AG04450 (cell line): ENCODE measurements at regions of chr22 and their contacts with region 1.

Region 1: GRCh38 chr22:23849009-23850006 is 8.4 kb upstream of the SLC2A11 start:
- DNase-seq: no peak
- H3K4me3 ChIP-seq: no peak overlapping the region
- H3K27ac ChIP-seq: no peak overlapping the region
- H3K27me3 ChIP-seq: no peaks in the 10 kb centered on the region
- CTCF ChIP-seq: peak; percentile 95

Region 2: DNA sequence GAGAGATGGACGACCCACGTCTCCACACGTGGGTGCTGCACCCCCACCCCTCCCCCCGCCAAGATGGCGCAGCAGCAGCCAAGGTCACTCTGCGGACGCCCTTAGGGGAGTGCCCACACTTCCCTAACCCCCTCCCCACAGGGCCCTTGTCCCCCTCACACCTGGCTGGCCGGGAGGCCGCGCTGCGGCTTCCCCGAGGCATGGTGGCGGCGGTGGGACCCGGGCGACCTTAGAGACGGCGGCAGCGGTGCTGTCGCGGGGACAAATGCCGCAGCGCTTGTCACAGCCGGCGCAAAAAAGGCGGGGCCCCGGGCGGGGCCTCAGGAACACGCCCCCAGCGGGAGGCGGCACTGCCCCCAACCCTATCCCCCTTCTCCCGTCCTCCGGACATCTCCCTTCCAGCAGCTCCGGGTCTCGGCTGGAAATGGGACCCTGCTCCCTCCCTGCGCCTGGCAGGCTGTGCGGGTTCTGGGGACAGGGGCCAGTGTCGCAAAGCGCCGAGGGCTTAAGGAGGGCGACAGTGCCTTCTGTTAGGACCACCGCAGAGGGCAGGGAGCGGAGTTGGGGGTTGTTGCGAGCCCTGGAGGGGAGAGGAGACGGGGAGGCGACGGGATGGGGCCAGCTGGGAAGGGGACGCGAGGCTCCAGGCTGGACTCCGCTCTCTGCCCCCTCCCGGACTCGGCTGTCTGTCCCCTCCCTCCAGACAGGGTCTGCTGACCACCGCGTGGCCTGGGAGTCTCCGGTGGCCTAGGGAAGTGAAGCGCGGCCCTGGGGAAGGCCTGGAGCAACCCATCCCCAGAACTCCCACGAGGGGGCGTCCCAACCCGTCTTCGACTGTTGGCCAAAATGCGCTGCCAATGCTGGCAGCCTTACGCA is 81.4 kb before region 1 on chr22 and contains the start of gene CHCHD10:
- CTCF ChIA-PET with region 1: interaction called, 36 read pairs
- POLR2A ChIA-PET with region 1: interaction called, 5 read pairs
- DNase-seq: no peak
- H3K4me3 ChIP-seq: peak within 1 kb of the TSS; percentile 59
- H3K27ac ChIP-seq: no peak within 1 kb of the TSS
- H3K27me3 ChIP-seq: no peaks in the 10 kb centered on the region
- CTCF ChIP-seq: peak; percentile 79
- polyA plus RNA-seq, gene CHCHD10: 10.1 and 16.9 TPM in 2 replicates

Region 3: DNA sequence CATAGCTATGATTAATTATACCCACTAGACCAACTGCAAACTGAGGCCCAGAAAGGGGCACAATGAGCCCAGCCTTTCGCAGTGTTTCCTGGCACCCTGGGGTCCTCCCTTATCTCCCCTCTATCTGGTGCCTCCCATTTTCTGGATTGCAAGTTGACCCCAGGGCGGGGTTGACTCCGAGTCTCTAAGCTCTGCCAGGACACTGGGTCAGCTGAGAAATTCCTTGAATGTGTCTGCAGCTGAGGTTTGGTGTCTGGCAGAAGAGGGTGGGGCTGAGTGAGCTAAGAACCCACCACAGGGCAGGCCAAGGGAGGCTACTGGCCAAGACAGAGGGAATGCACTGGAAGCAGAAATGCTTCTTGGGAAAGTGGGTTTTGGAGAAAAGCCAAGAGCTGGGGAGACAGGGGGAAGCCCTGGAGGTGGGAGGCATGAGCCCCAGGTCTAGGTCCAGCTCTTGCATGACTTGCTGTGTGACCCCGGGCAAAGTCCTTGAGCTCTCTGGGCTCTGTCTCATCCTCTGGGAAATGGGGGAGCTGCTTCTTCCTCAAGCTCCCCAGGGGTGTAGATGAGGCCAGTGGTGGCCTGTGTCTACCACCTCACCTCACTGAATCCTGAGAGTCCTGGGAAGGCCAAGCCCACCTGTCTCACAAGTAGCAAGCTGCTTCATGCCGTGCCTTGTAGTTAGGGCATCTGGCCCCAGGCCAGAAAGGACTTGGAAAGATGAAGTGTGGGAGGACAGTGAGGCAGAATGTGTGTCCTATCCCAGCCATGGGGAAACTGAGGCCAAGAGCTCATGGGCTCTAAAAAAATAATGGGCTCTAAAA is 74.4 kb before region 1 on chr22:
- CTCF ChIA-PET with region 1: interaction called, 36 read pairs
- POLR2A ChIA-PET with region 1: no interaction called
- DNase-seq: no peak
- H3K4me3 ChIP-seq: no peak overlapping the region
- H3K27ac ChIP-seq: no peak overlapping the region
- H3K27me3 ChIP-seq: no peaks in the 10 kb centered on the region
- CTCF ChIP-seq: no peak

Region 4: DNA sequence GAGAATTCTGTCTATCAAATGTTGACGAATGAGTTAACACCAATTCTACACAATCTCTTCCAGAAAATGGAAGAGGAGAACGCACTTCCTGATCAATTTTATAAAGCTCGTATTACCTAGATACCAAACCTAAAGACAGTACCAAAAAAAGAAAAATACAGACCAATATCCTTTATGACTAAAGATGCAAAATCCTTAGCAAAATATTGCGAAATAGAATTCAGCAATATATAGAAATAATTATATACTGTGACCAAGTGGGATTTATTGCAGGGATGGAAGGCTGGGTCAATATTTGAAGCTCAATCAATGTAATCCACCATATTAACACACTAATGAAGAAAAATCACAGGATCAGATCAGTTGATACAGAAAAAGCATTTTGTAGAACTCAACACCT is 36.9 kb before region 1 on chr22:
- CTCF ChIA-PET with region 1: interaction called, 12 read pairs
- POLR2A ChIA-PET with region 1: no interaction called
- DNase-seq: no peak
- H3K4me3 ChIP-seq: no peak overlapping the region
- H3K27ac ChIP-seq: no peak overlapping the region
- H3K27me3 ChIP-seq: no peaks in the 10 kb centered on the region
- CTCF ChIP-seq: no peak